AG04449 (cell line): ENCODE measurements at regions of chr16 and their contacts with region 1.

Region 1: DNA sequence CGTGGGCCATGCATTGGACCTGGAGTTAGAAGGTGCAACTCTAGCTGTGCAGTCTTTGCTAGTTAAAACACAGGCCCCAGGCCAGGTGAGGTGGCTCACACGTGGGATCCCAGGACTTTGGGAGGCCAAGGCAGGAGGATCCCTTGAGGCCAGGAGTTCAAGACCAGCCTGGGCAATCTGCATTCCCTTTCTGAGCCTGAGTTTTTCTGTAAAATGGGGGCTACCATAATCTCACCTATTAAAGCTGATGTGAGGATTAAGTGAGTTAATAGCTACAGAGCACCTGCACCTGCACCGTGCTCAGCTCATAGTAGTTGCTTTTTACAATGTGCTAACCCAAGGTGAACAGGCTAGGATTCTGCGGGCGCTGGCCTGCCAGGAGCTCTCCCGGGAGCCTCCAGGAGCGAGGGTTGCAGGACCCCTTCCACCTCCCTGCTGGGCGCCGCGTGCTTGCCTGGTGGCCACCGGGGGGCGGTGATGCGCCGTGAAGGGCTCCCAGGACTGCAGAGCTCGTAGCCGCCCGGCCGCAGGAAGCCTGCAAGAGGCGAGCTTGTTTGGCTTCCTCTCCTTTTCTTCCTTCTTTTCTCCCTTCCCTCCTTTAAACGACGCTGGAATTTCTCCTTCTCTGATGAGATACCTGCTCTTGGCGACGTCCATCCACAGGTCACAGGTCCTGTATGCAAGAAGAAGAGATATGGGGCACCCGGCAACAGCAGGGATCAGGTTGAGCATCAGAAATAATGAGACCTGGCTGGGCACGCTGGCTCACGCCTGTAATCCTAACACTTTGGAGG is 51.3 kb downstream of the ZFP90 start:
- DNase-seq: no peak
- H3K4me3 ChIP-seq: no peak overlapping the region; the same call in 1 of the 2 replicates
- CTCF ChIP-seq: peak; percentile 93

Region 2: DNA sequence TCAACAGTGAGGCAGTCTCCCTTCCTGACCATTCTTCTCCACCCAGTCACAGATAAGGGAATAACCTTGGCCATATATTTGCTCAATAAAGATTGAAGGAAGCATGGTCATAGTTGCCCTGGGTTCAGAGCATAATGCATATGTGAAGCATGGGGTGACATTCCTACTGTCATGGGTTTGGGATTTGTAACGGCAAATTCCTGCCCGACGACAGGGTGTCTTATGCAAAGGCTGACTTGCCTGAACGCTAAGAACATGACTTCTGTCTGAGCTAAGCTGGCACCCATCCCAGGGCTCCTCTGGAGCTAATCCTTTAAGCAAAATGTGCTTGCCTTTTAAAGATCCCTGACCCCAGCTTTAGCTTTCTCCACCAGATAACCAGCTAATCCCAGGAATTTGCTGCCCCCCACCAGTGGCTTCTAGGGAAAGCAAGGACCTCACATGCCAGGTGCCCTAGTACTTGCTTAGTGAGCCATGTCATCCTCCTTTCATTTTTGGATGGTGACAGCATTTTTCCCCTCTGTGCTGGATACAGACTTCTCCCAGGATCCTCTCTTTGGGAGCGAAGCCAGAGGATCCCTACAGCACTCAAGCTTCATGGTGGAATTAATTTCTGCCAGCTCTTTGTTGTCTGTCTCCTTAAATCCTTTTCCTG is 291.4 kb before region 1 on chr16:
- CTCF ChIA-PET with region 1: no interaction called
- POLR2A ChIA-PET with region 1: no interaction called
- DNase-seq: peak; percentile 46
- H3K4me3 ChIP-seq: no peak overlapping the region
- CTCF ChIP-seq: no peak

Region 3: DNA sequence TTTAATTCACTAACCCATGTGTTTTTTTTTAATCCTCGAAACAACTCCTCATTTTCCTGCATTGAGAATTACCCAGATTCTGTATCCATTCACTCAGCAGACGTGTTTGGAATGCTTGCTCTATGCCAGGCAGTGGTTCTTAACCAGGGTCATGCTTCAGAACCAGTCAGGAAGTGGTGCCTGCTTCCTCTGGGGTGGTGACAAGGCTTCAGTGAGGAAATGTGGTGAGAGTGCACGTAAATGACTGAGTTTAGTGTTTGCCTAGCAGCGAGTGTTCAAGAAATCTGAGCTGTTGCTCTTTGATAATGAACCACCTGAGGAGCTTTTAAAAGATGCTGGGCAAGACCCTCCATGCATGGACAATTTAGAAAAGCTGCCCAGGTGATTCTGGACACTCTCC is 41.5 kb before region 1 on chr16:
- CTCF ChIA-PET with region 1: no interaction called
- POLR2A ChIA-PET with region 1: no interaction called
- DNase-seq: no peak
- H3K4me3 ChIP-seq: no peak overlapping the region
- CTCF ChIP-seq: no peak

Region 4: DNA sequence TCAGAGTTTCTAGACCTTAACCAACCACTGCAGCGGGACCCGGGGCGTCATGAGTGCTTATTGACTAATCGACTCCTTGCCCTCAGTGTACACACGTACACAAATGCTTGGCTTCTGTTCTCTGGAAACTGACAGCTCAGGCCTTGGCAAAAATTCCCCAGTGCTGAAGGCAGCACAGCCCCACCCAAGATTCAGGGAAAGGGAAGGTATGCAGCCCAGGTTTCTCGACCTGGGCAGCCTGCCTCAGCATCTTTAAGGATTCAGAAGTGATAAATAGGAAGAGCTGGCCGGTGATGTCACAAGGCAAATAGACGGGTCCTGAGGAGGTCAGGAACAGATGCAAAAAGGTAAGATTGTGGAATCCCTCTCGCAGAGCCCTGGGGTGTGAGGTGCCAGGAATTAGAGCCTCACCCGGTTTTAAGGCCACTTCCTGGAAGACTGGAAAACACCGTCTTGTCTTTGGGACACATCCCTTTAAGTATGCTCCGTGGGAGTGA is 45.7 kb after region 1 on chr16:
- CTCF ChIA-PET with region 1: interaction called, 11 read pairs
- POLR2A ChIA-PET with region 1: no interaction called
- DNase-seq: no peak
- H3K4me3 ChIP-seq: no peak overlapping the region
- CTCF ChIP-seq: no peak

Region 5: GRCh38 chr16:68646953-68647659 is 56.7 kb after region 1 on chr16:
- CTCF ChIA-PET with region 1: no interaction called
- POLR2A ChIA-PET with region 1: no interaction called
- DNase-seq: no peak
- H3K4me3 ChIP-seq: no peak overlapping the region
- CTCF ChIP-seq: no peak

Region 6: GRCh38 chr16:68704232-68704867 is 114.0 kb after region 1 on chr16:
- CTCF ChIA-PET with region 1: interaction called, 11 read pairs
- POLR2A ChIA-PET with region 1: interaction called, 3 read pairs
- DNase-seq: no peak
- H3K4me3 ChIP-seq: no peak overlapping the region
- CTCF ChIP-seq: peak; percentile 90

Region 7: DNA sequence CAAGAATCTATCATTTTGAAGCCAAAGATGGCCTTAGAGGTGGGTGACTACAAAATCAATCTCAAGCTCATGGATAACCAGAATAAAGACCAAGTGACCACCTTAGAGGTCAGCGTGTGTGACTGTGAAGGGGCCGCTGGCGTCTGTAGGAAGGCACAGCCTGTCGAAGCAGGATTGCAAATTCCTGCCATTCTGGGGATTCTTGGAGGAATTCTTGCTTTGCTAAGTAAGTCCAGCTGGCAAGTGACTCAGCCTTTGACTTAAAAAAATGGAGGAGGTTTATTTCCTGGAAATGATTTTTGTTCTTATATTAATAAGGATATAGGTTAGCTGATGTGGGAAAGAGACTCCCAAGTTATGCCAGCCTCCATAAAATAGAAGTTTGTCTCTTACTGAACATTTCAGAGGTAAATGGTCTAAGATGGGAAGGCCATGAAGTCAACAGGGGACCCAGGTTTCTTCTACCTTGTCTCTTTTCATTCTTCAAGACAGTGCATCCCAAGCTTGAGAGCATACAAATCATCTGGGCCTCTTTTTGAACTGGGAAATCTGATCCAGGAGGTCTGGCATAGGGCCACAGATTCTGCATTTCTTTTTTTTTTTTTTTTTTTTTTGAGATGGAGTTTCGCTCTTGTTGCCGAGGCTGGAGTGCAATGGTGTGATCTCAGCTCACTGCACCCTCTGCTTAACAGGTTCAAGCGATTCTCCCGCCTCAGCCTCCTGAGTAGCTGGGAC is 233.2 kb after region 1 on chr16:
- CTCF ChIA-PET with region 1: interaction called, 13 read pairs
- POLR2A ChIA-PET with region 1: no interaction called
- DNase-seq: peak; percentile 83
- H3K4me3 ChIP-seq: no peak overlapping the region; the same call in 1 of the 2 replicates
- CTCF ChIP-seq: no peak

Region 8: DNA sequence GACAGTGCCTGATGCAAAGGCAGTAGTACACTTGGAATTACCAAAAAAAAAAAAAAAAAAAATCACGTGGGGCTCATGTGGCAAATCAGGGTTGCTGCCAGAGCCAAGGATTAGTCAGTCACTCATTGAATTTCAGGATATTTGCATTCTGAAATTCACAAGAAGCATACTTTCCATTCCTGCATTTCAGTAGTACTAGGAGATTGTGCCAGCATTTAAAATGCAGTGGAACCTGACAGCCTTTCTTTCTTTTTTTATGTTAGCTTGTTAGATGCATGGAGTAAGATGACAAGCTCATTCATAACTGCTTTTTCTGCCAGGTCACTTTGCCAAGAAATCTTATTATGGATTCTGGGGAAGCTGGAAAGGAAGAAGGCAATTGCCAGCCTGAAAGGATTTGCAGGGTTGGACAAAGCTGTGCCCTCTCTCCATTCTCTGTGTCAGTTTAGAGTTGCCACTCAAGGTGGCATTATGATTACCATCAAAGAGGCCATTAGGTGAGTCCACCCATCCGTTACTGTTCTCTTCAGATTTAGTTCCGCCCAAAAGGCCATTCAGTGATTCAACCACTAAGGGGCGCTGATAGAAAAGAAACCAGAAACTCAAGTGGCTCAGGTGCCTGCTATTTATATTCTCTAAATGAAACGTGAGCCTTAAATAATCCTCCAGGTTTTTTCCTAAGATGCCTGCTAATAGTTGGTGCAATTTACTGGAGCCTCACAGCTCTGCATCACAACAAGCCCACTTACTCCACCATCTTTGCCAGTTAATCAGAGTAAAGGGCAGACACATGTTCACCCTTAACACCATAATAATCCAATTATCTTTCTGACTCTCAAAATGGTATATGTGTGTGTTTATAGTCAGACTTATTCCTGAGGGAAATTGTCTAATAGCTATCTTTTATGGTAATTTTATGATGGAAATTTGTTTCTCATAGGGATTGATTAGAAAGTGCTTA is 311.9 kb after region 1 on chr16:
- CTCF ChIA-PET with region 1: interaction called, 17 read pairs
- POLR2A ChIA-PET with region 1: no interaction called
- DNase-seq: peak; percentile 46
- H3K4me3 ChIP-seq: no peak overlapping the region
- CTCF ChIP-seq: peak; percentile 53